ENCODE measurements at regions of chr10 and their contacts with region 1.

Region 1: DNA sequence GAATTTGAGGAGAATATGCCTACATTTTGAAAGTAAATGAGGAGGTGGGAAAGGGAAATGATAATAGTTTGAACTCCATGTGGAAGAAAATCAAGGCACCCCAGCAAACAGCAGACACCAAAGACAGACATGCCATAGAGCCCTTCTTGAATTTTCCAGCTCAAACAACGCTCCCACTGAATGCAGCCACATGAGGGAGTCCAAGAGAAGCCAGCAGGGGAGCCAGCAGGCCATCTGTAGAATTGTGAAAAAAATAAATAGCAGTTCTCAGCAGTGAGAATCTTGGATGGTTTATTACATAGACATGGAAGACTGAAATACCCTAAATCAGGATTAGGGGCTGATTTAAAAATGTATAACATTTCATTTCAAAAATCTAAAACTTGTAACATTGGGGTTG is 1567.3 kb upstream of the LRRTM3 start:
- DNase-seq: no peak
- ATAC-seq: peak; percentile 67
- H3K4me3 ChIP-seq: no peak overlapping the region
- H3K27ac ChIP-seq: no peak overlapping the region
- H3K4me1 ChIP-seq: no peaks in the 10 kb centered on the region
- H3K27me3 ChIP-seq: no peaks in the 10 kb centered on the region
- CTCF ChIP-seq: peak in 2 of 3 experiments; percentile 43 to 51; a peak in 3 of 6 replicates
- EP300 ChIP-seq: no peak
- POLR2A ChIP-seq: no peak
- RAD21 ChIP-seq: peak; percentile 64

Region 2: GRCh38 chr10:65968866-65969265 is 610.3 kb after region 1 on chr10:
- CTCF ChIA-PET with region 1: interaction called, 3 read pairs
- POLR2A ChIA-PET with region 1: no interaction called
- RAD21 ChIA-PET with region 1: no interaction called
- SMC1A ChIA-PET with region 1: no interaction called
- in situ Hi-C with region 1: no loop called
- intact Hi-C with region 1: loop called (anchors 10 kb)
- DNase-seq: no peak
- ATAC-seq: peak; percentile 71
- H3K4me3 ChIP-seq: no peak overlapping the region
- H3K27ac ChIP-seq: no peak overlapping the region
- H3K4me1 ChIP-seq: no peaks in the 10 kb centered on the region
- H3K27me3 ChIP-seq: no peaks in the 10 kb centered on the region
- CTCF ChIP-seq: peak; percentile 14 to 35 (median 27); a peak in 4 of 6 replicates
- EP300 ChIP-seq: no peak
- POLR2A ChIP-seq: no peak
- RAD21 ChIP-seq: 0 out of 2 replicates have a peak, but pooled peaks have one; percentile 19

Measured in GM12878 (cell line).